Activated CD8-positive, alpha-beta memory T cell treated with anti-CD3 and anti-CD28 coated beads, Interleukin-2, amount 10 ng/mL, durations not matched to agents 7 days and 5 days (primary cell): ENCODE measurements at regions of chr2 and their contacts with region 1.

Region 1: GRCh38 chr2:134453476-134453875 is 199.6 kb downstream of the MGAT5 start:
- DNase-seq: no peak
- ATAC-seq: no peak
- H3K4me3 Mint-ChIP-seq: no peak overlapping the region
- H3K27ac Mint-ChIP-seq: no peak overlapping the region
- H3K4me1 Mint-ChIP-seq: peaks cover 3% of the 10 kb centered on the region
- H3K27me3 Mint-ChIP-seq: no peaks in the 10 kb centered on the region

Region 2: GRCh38 chr2:133886735-133887660 is 566.5 kb before region 1 on chr2:
- CTCF ChIA-PET with region 1: interaction called, 13 read pairs
- DNase-seq: peak; percentile 62
- ATAC-seq: peak; percentile 55
- H3K4me3 Mint-ChIP-seq: no peak overlapping the region
- H3K27ac Mint-ChIP-seq: no peak overlapping the region
- H3K4me1 Mint-ChIP-seq: no peaks in the 10 kb centered on the region
- H3K27me3 Mint-ChIP-seq: peaks cover 18% of the 10 kb centered on the region

Region 3: GRCh38 chr2:133958832-133959465 is 494.5 kb before region 1 on chr2:
- CTCF ChIA-PET with region 1: no interaction called
- DNase-seq: no peak
- ATAC-seq: no peak
- H3K4me3 Mint-ChIP-seq: no peak overlapping the region
- H3K27ac Mint-ChIP-seq: no peak overlapping the region
- H3K4me1 Mint-ChIP-seq: no peaks in the 10 kb centered on the region
- H3K27me3 Mint-ChIP-seq: peaks cover 25% of the 10 kb centered on the region

Region 4: GRCh38 chr2:134118279-134119116 is 335.0 kb before region 1 on chr2:
- CTCF ChIA-PET with region 1: interaction called, 24 read pairs
- DNase-seq: peak; percentile 93
- ATAC-seq: peak; percentile 47
- H3K4me3 Mint-ChIP-seq: peak overlapping the region; percentile 87
- H3K27ac Mint-ChIP-seq: peak overlapping the region; percentile 92
- H3K4me1 Mint-ChIP-seq: peaks cover 35% of the 10 kb centered on the region
- H3K27me3 Mint-ChIP-seq: peaks cover 14% of the 10 kb centered on the region

Region 5: DNA sequence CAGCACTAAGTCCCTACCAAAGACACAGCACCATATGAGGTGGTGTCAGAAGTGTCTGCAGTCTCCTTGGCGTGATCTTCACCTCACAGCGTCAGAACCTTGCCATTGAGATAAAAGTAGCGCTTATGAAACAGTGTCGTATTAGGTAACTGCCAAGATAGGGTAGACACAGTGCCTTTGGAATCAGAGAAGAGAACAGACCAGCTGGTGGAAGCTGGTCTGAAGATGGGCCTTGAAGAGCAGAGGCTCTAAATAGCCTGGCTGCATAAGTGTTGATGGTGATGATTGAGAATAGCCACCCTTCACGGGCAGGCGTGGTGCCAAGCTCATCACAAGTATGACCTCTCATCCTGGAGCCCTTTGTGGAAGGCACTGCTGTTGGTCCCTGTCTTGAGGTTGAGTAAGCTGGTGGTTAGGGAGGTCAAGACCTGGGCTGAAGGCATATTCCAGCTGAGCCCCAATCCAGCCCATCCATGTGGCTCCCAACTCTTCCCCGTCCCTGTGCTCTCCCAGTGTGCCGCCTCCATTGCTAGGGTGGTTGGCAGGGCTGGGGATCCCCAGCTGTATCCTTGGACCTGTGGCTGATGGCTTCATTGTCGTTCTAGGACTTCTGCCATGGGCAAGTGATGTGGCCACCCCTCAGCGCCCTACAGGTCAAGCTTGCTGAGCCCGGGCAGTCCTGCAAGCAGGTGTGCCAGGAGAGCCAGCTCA is 12.2 kb before region 1 on chr2:
- CTCF ChIA-PET with region 1: interaction called, 15 read pairs
- DNase-seq: no peak
- ATAC-seq: no peak
- H3K4me3 Mint-ChIP-seq: no peak overlapping the region
- H3K27ac Mint-ChIP-seq: no peak overlapping the region
- H3K4me1 Mint-ChIP-seq: no peaks in the 10 kb centered on the region
- H3K27me3 Mint-ChIP-seq: no peaks in the 10 kb centered on the region

Region 6: GRCh38 chr2:134558208-134558855 is 104.9 kb after region 1 on chr2:
- CTCF ChIA-PET with region 1: no interaction called
- DNase-seq: no peak
- ATAC-seq: no peak
- H3K4me3 Mint-ChIP-seq: no peak overlapping the region
- H3K27ac Mint-ChIP-seq: no peak overlapping the region
- H3K4me1 Mint-ChIP-seq: no peaks in the 10 kb centered on the region
- H3K27me3 Mint-ChIP-seq: peaks cover 31% of the 10 kb centered on the region

Region 7: GRCh38 chr2:134900151-134900550 is 446.7 kb after region 1 on chr2:
- CTCF ChIA-PET with region 1: interaction called, 13 read pairs
- DNase-seq: no peak
- ATAC-seq: no peak
- H3K4me3 Mint-ChIP-seq: no peak overlapping the region
- H3K27ac Mint-ChIP-seq: no peak overlapping the region
- H3K4me1 Mint-ChIP-seq: no peaks in the 10 kb centered on the region
- H3K27me3 Mint-ChIP-seq: peaks cover 16% of the 10 kb centered on the region